Activated T-helper 2 cell treated with anti-CD3 and anti-CD28 coated beads, Interferon-gamma antibody, Interleukin-2, Interleukin-4, amounts not matched to agents 10 μg/mL and 5 μg/mL and 100 μg/mL, durations not matched to agents 14 hours and 24 hours and 36 hours (primary cell): ENCODE measurements at regions of chr14 and their contacts with region 1.

Region 1: GRCh38 chr14:54440873-54441868 is at the start of gene CNIH1:
- DNase-seq: peak; percentile 90
- H3K4me3 Mint-ChIP-seq: peak within 1 kb of the TSS; percentile 95
- H3K27ac Mint-ChIP-seq: peak within 1 kb of the TSS; percentile 97
- H3K4me1 Mint-ChIP-seq: peaks cover 47% of the 10 kb centered on the region
- H3K27me3 Mint-ChIP-seq: peaks cover 5% of the 10 kb centered on the region
- total RNA-seq, gene CNIH1: 113 and 115 TPM in 2 replicates

Region 2: GRCh38 chr14:54509546-54510501 is 68.7 kb after region 1 on chr14 and contains the start of gene CGRRF1:
- intact Hi-C with region 1: loop called (anchors 1 kb)
- DNase-seq: peak; percentile 94
- H3K4me3 Mint-ChIP-seq: peak within 1 kb of the TSS; percentile 88
- H3K27ac Mint-ChIP-seq: peak within 1 kb of the TSS; percentile 67
- H3K4me1 Mint-ChIP-seq: peaks cover 25% of the 10 kb centered on the region
- H3K27me3 Mint-ChIP-seq: peaks cover 6% of the 10 kb centered on the region
- total RNA-seq, gene CGRRF1: 6.2 and 9.1 TPM in 2 replicates